ENCODE measurements at regions of chr9 and their contacts with region 1.

Region 1: GRCh38 chr9:89410641-89411350 is 87.1 kb downstream of the SEMA4D start:
- DNase-seq: peak in 2 of 9 donors; percentile 29 to 60
- ATAC-seq: peak; percentile 37
- H3K4me3 ChIP-seq: no peak overlapping the region
- H3K4me3 Mint-ChIP-seq: peak overlapping the region in 9 of 10 donors; percentile 7 to 85 (median 54)
- H3K27ac ChIP-seq: peak overlapping the region; percentile 20
- H3K27ac Mint-ChIP-seq: peak overlapping the region; percentile 67 to 93 (median 84)
- H3K4me1 ChIP-seq: peaks cover 57 to 62% of the 10 kb centered on the region in 2 donors
- H3K4me1 Mint-ChIP-seq: peaks cover 56 to 100% (median 93%) of the 10 kb centered on the region in 7 donors
- H3K27me3 ChIP-seq: no peaks in the 10 kb centered on the region
- H3K27me3 Mint-ChIP-seq: no peaks in the 10 kb centered on the region

Region 2: DNA sequence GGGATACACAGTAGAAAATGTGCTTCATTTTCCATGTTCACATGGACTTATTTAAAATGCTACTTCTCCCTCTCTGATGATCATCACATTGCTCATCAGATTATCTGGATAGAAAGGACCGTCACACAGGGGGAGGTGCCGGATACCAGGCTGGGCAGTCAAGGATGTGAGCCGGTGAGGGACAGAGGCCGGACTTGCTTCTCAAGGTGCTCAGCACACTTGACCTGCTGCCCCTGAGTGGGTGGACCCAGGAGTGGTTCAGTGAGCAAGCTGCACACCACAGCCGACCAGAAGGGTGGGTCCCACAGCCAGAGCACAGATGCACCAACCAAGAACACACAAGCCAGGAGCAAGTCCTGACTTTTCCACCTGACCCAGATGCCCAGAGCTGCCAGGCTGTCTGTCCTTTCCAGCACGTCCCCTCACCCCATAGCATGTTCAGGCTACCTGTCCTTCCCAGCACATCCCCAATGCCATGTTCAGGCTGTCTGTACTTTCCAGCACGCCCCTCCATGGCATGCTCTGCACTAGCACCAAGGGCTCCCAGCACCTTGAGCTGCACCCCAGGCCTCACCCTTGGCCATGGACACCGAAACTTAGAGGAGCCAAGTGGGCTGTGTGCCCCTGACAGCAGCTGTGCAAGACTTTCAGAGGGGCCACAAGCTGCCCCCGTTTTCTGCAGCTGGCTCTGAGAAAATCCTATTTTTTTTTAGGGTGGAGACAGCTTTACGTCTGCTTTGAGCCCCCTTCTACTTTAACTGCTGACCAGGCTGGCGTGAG is 14.7 kb before region 1 on chr9:
- CTCF ChIA-PET with region 1: no interaction called
- POLR2A ChIA-PET with region 1: interaction called, 10 read pairs
- intact Hi-C with region 1: no loop called
- DNase-seq: no peak
- ATAC-seq: no peak
- H3K4me3 ChIP-seq: no peak overlapping the region
- H3K4me3 Mint-ChIP-seq: peak overlapping the region in 1 of 10 donors; percentile 45
- H3K27ac ChIP-seq: no peak overlapping the region
- H3K27ac Mint-ChIP-seq: peak overlapping the region in 6 of 9 donors; percentile 23 to 62 (median 44)
- H3K4me1 ChIP-seq: no peaks in the 10 kb centered on the region
- H3K4me1 Mint-ChIP-seq: peaks cover 11 to 41% (median 21%) of the 10 kb centered on the region in 7 donors
- H3K27me3 ChIP-seq: no peaks in the 10 kb centered on the region
- H3K27me3 Mint-ChIP-seq: no peaks in the 10 kb centered on the region

Region 3: GRCh38 chr9:89483592-89484522 is 73.1 kb after region 1 on chr9:
- CTCF ChIA-PET with region 1: no interaction called
- POLR2A ChIA-PET with region 1: interaction called, 5 read pairs
- intact Hi-C with region 1: loop called in 1 of 2 experiments (anchors 2 kb)
- DNase-seq: peak; percentile 41 to 76 (median 66)
- ATAC-seq: peak; percentile 84
- H3K4me3 ChIP-seq: peak overlapping the region; percentile 48
- H3K4me3 Mint-ChIP-seq: peak overlapping the region; percentile 85 to 100 (median 90)
- H3K27ac ChIP-seq: peak overlapping the region; percentile 68
- H3K27ac Mint-ChIP-seq: peak overlapping the region; percentile 88 to 99 (median 93)
- H3K4me1 ChIP-seq: peaks cover 67 to 71% of the 10 kb centered on the region in 2 donors
- H3K4me1 Mint-ChIP-seq: peaks cover 70 to 96% (median 90%) of the 10 kb centered on the region in 7 donors
- H3K27me3 ChIP-seq: no peaks in the 10 kb centered on the region
- H3K27me3 Mint-ChIP-seq: no peaks in the 10 kb centered on the region

Region 4: DNA sequence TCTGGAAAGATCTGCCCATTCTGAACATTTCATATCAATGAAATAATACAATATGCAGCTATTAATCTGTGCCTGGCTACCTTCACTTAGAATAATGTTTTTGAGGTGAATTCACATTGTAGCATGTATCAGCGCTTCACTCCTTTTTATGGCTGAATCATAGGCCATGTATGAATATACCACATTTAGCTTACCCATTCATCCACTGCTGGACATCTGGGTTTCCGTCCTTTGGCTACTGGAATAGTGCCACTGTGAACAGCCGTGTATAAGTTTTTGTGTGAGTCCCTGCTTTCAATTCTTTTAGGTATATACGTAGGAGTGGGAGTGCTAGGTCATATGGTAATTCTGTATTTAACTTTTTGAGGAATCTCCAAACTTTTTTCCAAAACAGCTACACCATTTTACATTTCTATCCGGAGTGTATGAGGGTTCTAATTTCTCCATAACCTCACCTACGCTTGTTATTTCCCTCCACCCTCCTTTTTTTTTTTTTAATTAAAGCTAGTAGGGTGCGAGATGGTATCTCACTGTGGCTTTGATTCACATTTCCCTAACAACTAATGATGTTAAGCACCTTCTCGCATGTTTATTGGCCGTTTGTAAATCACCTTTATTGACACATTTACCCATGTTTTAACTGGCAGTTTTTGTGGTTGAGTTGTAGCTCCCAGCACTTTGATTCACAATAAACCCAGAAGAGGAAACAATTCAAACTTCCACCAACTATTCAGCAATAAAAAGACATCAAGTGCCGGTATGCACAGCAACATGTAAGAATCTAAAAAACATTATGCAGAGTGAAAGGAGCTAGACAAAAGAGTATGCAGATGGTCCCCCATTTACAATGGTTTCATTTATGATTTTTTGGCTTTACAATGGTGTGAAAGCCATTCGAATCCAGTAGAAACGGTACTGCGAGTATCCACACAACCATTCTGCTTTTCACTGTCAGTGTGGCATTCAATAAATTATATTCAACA is 79.0 kb after region 1 on chr9:
- CTCF ChIA-PET with region 1: interaction called, 4 read pairs
- POLR2A ChIA-PET with region 1: interaction called, 11 read pairs
- intact Hi-C with region 1: loop called in 1 of 2 experiments (anchors 2 kb)
- DNase-seq: peak in 8 of 9 donors; percentile 15 to 87 (median 78)
- ATAC-seq: peak; percentile 90
- H3K4me3 ChIP-seq: peak overlapping the region; percentile 22
- H3K4me3 Mint-ChIP-seq: peak overlapping the region; percentile 60 to 100 (median 88)
- H3K27ac ChIP-seq: peak overlapping the region; percentile 69
- H3K27ac Mint-ChIP-seq: peak overlapping the region; percentile 82 to 98 (median 89)
- H3K4me1 ChIP-seq: peaks cover 81 to 82% of the 10 kb centered on the region in 2 donors
- H3K4me1 Mint-ChIP-seq: peaks cover 78 to 100% (median 92%) of the 10 kb centered on the region in 7 donors
- H3K27me3 ChIP-seq: no peaks in the 10 kb centered on the region
- H3K27me3 Mint-ChIP-seq: no peaks in the 10 kb centered on the region

Region 5: DNA sequence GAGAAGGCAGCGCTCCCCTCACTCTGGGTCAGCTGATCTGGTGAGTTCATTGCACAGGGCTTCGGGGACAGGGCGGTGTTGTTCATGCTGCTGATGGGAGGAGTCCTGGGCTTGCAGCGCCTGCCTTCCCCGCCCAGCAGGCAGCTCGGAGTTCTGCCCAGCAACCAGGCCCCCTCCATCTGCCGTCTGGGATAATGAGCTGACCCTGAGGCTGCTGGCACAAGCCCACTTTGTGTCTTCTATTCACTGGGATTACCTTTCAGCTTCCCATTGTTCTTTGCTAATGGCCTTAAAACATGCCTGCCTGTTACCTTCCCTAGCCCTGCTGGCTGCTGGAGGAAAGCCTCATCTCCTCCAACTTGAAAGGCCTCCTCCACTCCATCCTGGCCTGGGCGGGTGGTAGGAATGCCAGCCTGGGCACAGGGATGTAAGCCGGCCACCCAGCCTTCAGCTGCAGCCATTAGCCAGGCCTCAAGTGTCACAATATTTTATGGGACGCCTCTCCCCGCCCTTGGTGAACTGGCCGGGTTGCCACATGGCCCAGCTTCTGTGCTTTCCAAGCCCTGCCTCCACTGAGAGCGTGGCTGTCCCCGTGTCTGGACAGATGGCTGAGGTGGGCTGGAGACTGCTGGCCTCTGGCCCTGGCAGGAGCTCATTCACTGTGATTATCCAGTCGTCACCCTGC is 264.4 kb after region 1 on chr9:
- CTCF ChIA-PET with region 1: no interaction called
- POLR2A ChIA-PET with region 1: no interaction called
- intact Hi-C with region 1: no loop called
- DNase-seq: no peak
- ATAC-seq: no peak
- H3K4me3 ChIP-seq: no peak overlapping the region
- H3K4me3 Mint-ChIP-seq: no peak overlapping the region
- H3K27ac ChIP-seq: no peak overlapping the region
- H3K27ac Mint-ChIP-seq: no peak overlapping the region
- H3K4me1 ChIP-seq: no peaks in the 10 kb centered on the region
- H3K4me1 Mint-ChIP-seq: peaks cover 0 to 21% (median 0%) of the 10 kb centered on the region in 7 donors
- H3K27me3 ChIP-seq: no peaks in the 10 kb centered on the region
- H3K27me3 Mint-ChIP-seq: no peaks in the 10 kb centered on the region

Measured in naive thymus-derived CD4-positive, alpha-beta T cell (primary cell).